HCT116 (cell line): ENCODE measurements at regions of chr14 and their contacts with region 1.

Region 1: DNA sequence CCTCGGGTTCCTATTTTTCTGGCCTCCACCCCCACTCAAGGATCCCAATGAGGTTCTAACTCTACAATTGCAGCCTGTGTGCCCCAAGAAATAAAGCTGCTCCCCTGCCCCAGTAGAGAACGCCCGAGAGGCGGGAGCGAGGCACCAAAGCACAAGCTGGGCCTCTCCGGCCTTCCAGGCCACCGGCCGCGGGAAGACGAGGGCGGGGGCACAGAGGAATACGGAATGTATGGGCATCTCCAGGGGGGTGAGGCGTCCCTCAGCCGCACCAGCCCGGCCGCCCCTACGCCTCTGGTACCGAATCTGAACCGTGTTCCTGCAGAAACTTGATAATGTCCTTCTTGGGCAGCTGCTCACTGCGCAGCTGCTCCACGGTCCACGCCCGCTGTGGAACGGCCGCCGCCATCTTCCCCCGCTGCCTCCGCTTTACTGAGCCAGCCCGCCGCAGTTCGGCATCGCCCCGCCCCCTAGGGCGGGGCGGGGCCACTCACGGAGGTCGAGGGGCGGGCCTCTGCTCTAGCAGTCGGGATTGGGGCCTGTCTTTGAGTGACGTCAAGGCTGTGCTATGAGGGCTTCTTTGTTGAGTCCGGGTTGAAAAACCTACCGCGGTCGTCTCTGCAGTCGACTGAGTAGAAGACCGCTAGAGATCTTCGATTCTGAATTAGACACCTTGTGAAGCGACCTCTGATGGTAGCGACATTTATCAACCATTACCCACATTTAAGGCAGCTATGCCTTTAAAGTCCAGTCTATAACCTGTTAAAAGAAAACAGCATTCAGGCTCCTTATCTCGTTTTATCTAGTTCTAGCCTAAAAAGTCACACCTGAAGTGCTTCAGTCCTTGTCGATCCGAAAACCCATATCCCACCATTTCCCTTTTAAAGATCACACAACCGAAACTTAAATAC is at the start of gene FKBP3:
- DNase-seq: peak; percentile 99
- ATAC-seq: peak; percentile 92
- H3K4me3 ChIP-seq: peak within 1 kb of the TSS; percentile 67 to 92
- H3K27ac ChIP-seq: peak within 1 kb of the TSS; percentile 76
- H3K4me1 ChIP-seq: peaks cover 9 to 21% of the 10 kb centered on the region in 2 experiments
- H3K27me3 ChIP-seq: no peaks in the 10 kb centered on the region
- CTCF ChIP-seq: peak in 1 of 3 experiments; percentile 33; a peak in 1 of 6 replicates
- POLR2A ChIP-seq: peak; percentile 85
- RAD21 ChIP-seq: peak; percentile 31; the same call in 1 of the 2 replicates
- total RNA-seq, gene FKBP3: 67.8 TPM

Region 2: DNA sequence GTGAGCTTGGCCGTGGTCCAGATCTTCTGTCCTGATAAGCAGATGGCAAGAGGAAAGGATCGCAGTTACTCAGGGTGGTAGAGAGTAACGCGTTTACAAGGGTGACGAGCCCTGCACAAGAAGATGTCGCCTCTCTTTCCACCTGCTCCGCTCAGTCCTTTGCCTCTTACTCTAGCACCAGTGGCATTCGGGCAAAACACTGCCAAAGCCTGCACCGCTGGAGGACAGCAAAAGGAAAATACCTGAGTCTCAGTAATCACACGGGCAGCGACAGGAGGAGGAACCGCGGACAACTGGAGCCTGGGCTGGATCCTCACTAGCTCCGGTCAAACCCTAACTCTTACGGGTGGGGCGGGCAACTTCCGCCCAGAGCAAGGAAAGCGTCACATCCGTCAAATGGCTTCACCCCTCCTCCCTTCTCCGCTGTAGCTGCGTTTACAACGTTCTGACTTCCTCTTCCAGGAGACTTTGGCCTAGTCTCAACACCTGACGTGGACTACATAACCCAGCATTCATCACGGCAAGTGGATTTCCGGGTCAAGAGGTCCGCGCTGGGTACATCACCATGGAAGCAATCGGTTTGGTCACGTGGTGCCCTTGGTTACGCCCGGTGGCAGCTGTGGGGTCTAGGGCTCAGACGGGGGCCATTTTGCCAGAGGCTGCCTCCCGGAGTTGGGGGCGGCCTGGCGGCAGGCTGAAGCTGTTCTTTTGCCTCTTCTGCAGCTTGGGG is 172.5 kb before region 1 on chr14 and contains the starts of genes KLHL28 and TOGARAM1:
- CTCF ChIA-PET with region 1: no interaction called
- POLR2A ChIA-PET with region 1: interaction called, 4 read pairs
- RAD21 ChIA-PET with region 1: no interaction called
- intact Hi-C with region 1: loop called (anchors 2 kb)
- DNase-seq: peak; percentile 98
- ATAC-seq: peak; percentile 93
- H3K4me3 ChIP-seq: peak within 1 kb of the TSS; percentile 72 to 94
- H3K27ac ChIP-seq: peak within 1 kb of the TSS; percentile 68
- H3K4me1 ChIP-seq: peaks cover 9 to 11% of the 10 kb centered on the region in 2 experiments; a peak in 3 of 4 replicates
- H3K27me3 ChIP-seq: no peaks in the 10 kb centered on the region
- CTCF ChIP-seq: no peak
- POLR2A ChIP-seq: peak; percentile 94
- RAD21 ChIP-seq: no peak
- total RNA-seq, gene KLHL28: 11.2 TPM
- total RNA-seq, gene TOGARAM1: 1.9 TPM

Region 3: GRCh38 chr14:45089813-45090212 is 44.5 kb before region 1 on chr14:
- CTCF ChIA-PET with region 1: no interaction called
- POLR2A ChIA-PET with region 1: interaction called, 3 read pairs
- RAD21 ChIA-PET with region 1: no interaction called
- intact Hi-C with region 1: loop called (anchors 5 kb)
- DNase-seq: no peak
- ATAC-seq: no peak
- H3K4me3 ChIP-seq: no peak overlapping the region
- H3K27ac ChIP-seq: no peak overlapping the region
- H3K4me1 ChIP-seq: peaks cover 0 to 11% of the 10 kb centered on the region in 2 experiments; a peak in 2 of 4 replicates
- H3K27me3 ChIP-seq: no peaks in the 10 kb centered on the region
- CTCF ChIP-seq: no peak
- POLR2A ChIP-seq: no peak
- RAD21 ChIP-seq: no peak

Region 4: GRCh38 chr14:45253068-45253753 is 118.9 kb after region 1 on chr14 and contains the start of gene MIS18BP1:
- CTCF ChIA-PET with region 1: no interaction called
- POLR2A ChIA-PET with region 1: no interaction called
- RAD21 ChIA-PET with region 1: no interaction called
- intact Hi-C with region 1: loop called (anchors 1 kb)
- DNase-seq: peak; percentile 92
- ATAC-seq: peak; percentile 88
- H3K4me3 ChIP-seq: peak within 1 kb of the TSS; percentile 81 to 91
- H3K27ac ChIP-seq: peak within 1 kb of the TSS; percentile 96
- H3K4me1 ChIP-seq: peaks cover 13 to 22% of the 10 kb centered on the region in 2 experiments
- H3K27me3 ChIP-seq: no peaks in the 10 kb centered on the region
- CTCF ChIP-seq: peak; percentile 59 to 72 (median 68); a peak in 5 of 6 replicates
- POLR2A ChIP-seq: peak; percentile 73
- RAD21 ChIP-seq: peak; percentile 38; the same call in 1 of the 2 replicates
- total RNA-seq, gene MIS18BP1: 37.9 TPM